Dendritic cell treated with granulocyte-macrophage colony-stimulating factor and Interleukin-4, amounts not matched to agents 40 ng/mL and 50 ng/mL, for 4 days (primary cell): ENCODE measurements at regions of chr19 and their contacts with region 1.

Region 1: DNA sequence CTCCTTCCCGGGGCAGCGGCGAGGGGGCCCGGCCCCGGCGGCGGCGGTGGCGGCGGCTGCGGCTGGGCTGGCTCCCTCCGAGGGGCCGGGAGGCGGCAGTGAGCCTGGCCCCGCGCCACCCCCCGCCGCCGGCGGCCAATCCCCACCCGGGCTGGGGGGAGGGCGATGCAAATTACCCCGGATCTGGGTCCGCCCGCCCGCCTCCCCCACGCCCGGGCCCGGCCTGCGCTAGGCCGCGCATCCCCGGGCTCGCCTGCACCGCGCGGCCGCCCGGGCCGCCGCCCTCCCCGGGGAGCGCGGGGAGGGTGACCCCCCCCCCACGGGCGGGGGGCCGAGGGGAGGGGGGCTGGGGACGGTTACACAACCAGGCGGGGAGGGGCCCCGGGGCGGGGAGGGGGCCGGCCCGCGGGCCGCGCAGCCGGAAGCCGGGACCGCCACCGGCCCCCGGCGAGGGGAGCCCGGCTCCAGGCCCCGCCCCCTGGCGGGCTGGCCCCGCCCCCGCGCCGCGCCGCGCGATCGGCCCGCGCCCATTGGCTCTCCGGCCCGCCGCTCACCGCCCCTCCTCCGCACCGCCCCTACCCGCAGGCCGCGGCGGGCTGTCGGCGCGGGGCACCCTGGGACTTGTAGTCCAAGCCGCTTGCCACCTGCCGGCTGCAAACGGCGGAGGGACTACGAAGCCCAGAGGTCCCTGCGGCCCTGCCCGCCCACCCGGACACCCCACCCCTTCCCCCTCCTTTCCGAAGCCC is 1.1 kb downstream of the ZBTB7A start:
- H3K4me3 Mint-ChIP-seq: peak overlapping the region; percentile 71
- H3K27ac Mint-ChIP-seq: peak overlapping the region; percentile 75
- H3K4me1 Mint-ChIP-seq: peaks cover 51% of the 10 kb centered on the region
- H3K27me3 Mint-ChIP-seq: no peaks in the 10 kb centered on the region

Region 2: DNA sequence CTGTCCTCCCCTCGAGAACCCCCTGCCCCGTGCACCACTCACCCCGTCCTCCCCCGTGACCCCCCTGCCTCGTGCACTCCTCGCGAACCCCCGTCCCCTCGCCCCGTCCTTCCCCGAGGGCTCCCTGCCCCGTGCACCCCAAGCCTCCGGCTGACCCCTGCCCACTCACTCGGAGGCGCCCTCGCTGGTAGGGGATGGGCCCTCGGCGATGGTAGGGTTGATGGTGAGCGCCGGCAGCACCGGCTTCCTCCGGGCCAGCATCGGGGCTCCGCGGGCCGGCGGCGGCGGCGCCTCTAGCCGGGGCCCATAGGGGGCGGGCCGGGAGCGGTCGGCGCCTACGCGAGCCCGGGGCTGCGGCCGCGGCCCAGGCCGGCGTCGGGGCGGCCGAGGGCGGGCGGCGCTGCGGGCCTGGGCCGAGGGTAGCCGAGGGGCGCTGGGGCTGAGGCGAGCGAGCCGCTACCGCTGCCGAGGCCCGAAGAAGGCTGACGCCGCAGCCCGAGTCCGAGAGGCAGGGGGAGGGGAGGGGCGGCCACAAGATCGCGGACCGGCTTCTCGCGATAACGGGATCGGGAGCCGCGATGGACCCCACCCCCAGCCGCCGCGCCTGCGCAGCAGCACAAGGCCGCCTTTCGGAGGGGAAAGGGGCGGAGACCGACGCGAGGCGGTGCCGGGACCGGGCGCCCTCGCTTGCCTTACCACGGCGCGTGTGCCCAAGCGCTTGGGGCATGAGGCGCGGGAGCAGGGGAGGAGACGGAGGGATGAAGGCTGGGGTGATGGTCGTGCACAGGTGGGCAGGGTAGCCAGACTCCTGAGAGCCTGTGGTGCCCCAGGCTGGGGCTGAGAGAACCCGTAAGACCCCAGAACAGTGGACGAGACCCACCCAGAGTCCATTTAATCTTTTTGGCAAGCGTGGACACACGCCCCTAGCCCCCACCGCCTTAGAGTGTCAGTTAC is 58.3 kb after region 1 on chr19 and contains the start of gene MAP2K2:
- intact Hi-C with region 1: loop called (anchors 10 kb)
- H3K4me3 Mint-ChIP-seq: peak within 1 kb of the TSS; percentile 88
- H3K27ac Mint-ChIP-seq: peak within 1 kb of the TSS; percentile 79
- H3K4me1 Mint-ChIP-seq: peaks cover 37% of the 10 kb centered on the region
- H3K27me3 Mint-ChIP-seq: no peaks in the 10 kb centered on the region

Region 3: GRCh38 chr19:4172861-4173473 is 107.4 kb after region 1 on chr19:
- intact Hi-C with region 1: no loop called
- H3K4me3 Mint-ChIP-seq: no peak overlapping the region
- H3K27ac Mint-ChIP-seq: no peak overlapping the region
- H3K4me1 Mint-ChIP-seq: peaks cover 5% of the 10 kb centered on the region
- H3K27me3 Mint-ChIP-seq: peaks cover 24% of the 10 kb centered on the region